Activated CD8-positive, alpha-beta memory T cell treated with anti-CD3 and anti-CD28 coated beads, Interleukin-2, amount 10 ng/mL, durations not matched to agents 7 days and 5 days (primary cell): ENCODE measurements at regions of chr7 and their contacts with region 1.

Region 1: DNA sequence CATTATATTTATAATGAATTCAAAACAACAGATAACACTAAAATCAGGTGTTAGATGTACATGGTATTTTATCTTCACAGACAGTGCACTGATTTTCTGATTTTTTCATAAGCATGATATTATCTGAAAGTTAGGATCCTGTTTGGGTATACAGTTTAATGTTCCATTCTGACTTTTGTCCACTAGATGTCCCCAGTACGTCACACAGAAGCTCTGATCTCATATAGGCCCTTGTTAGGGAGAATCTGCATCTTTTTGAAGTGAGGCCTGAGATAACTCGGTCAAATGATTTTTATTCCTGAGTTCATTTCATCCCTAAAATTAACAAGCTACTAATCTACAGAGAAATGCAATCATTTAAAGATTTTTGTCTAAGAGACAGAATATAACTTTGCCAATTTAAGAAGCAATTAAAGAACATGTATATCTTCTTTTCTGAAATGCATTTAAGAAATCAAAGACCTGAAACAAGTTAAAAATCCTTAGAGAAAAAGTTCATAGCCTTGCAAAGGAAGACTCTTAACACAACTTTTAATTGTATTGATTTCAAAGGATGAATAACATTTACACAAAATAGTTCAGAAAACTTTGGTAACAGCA is 72.0 kb upstream of the TES start:
- DNase-seq: peak; percentile 46
- ATAC-seq: peak; percentile 92
- H3K4me3 Mint-ChIP-seq: no peak overlapping the region
- H3K27ac Mint-ChIP-seq: no peak overlapping the region
- H3K4me1 Mint-ChIP-seq: peaks cover 31% of the 10 kb centered on the region
- H3K27me3 Mint-ChIP-seq: peaks cover 13% of the 10 kb centered on the region

Region 2: DNA sequence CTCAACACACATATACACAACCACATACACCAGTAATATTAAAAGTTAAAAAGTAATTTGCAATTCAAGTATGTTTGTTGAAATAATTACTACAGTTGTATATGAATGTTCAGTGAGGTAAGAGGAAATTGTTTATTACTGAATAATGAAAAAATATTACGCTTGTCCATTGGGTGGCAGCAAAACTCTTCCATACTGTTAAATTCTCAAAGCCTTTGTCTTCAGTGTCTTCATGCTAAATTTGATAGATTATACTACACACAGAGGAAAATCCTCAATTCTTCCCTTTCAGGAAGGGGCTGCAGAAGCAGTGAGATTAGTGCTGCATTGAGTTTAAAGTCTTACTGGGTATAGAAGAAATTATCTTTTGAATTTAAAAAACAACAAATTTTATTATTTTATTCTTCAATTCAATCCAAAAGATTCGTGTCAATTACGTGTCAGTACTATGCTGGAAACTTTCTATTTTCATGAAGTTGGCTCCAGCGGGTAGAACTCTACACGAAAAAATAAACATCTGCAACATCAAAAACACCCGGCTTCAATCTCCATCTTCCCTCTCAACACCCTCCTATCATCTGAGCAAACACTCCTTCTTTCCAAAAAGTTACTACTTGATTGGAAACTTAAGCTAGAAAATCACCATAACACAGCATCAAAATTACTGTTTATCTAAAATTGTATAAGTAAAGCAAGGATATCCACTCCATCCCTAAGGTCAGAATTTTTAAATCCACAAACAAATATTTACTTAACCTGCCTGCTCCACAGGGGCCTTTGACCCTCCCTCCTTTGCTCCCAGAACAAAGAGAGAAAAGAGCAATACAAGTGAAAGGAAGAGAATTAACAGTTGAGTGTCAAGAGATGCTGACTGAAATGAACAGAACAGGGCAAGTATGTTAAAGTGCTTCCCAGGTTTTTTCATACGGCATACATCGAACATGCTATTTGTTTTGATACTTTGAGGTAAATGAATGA is 35.0 kb after region 1 on chr7:
- CTCF ChIA-PET with region 1: interaction called, 11 read pairs
- DNase-seq: no peak
- ATAC-seq: peak; percentile 45
- H3K4me3 Mint-ChIP-seq: no peak overlapping the region
- H3K27ac Mint-ChIP-seq: no peak overlapping the region
- H3K4me1 Mint-ChIP-seq: peaks cover 8% of the 10 kb centered on the region
- H3K27me3 Mint-ChIP-seq: peaks cover 15% of the 10 kb centered on the region